ENCODE measurements at regions of chr17 and their contacts with region 1.

Region 1: GRCh38 chr17:41530062-41531051 is 2.2 kb upstream of the KRT19 start:
- DNase-seq: no peak
- ATAC-seq: peak; percentile 75
- H3K4me3 ChIP-seq: peak overlapping the region; percentile 0 to 3; a peak in 3 of 4 replicates
- H3K27ac ChIP-seq: peak overlapping the region; percentile 96
- H3K4me1 ChIP-seq: peaks cover 48% of the 10 kb centered on the region
- H3K27me3 ChIP-seq: no peaks in the 10 kb centered on the region
- CTCF ChIP-seq: no peak

Region 2: DNA sequence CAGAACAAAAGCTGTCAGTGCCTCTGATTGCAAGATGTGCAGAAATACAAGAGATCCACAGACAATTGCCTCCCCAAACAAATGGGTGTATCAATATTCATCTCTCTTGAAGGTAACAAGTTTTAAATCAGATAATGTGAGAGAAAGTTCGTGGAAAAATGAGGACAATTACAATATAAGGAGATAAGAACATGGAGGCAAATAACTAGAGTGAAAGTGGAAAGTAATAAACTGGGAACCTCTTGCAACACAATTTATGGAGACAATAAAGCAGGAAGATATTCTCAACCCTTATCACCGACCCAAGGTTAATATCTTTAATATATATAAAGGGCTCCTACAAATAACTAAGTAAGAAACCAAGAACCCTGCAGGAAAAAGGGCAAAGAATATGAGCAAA is 12.0 kb after region 1 on chr17:
- CTCF ChIA-PET with region 1: interaction called, 6 read pairs
- POLR2A ChIA-PET with region 1: interaction called, 12 read pairs
- in situ Hi-C with region 1: no loop called
- intact Hi-C with region 1: no loop called
- DNase-seq: no peak
- ATAC-seq: no peak
- H3K4me3 ChIP-seq: no peak overlapping the region
- H3K27ac ChIP-seq: peak overlapping the region; percentile 77; the same call in 1 of the 2 replicates
- H3K4me1 ChIP-seq: peaks cover 51% of the 10 kb centered on the region
- H3K27me3 ChIP-seq: no peaks in the 10 kb centered on the region
- CTCF ChIP-seq: no peak

Region 3: DNA sequence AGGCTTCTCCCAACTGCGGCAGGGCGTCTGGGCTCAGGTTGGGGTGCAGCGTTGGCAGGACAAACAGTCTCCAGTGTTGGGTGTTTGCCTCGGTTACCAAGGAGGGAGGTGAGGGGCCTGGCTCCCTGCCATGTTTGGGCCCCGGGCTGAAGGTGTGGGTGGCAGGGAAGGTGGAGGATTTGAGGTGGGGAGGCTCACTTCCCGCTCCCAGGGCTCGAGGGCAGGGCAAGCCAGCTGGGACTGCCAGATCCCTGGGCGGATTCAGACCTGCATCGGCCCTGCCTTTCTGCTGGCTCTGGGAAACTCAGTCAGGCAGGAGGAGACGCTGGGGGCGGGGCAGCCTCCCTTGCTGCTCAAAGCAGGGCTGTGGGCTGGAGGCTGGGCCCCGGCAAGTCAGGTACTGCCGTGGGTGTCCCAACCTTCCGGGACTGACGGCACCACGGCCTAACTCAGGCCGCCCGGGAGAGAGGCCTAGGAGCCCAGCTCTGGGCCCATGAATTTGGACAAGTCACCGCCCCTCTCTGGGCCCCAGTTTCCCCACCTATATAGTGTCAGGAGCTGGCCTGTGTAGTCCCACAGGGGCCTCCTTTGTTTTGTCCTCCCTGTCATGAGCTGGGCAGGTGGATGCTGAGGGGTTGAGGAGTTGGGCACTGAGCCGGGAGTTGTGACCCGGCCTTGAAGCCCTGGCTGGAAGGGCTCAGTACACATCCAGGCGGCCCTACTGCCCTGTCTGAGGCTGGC is 125.4 kb after region 1 on chr17:
- CTCF ChIA-PET with region 1: no interaction called
- POLR2A ChIA-PET with region 1: no interaction called
- in situ Hi-C with region 1: no loop called
- intact Hi-C with region 1: no loop called
- DNase-seq: no peak
- ATAC-seq: peak; percentile 33; the same call in 1 of the 2 replicates
- H3K4me3 ChIP-seq: no peak overlapping the region
- H3K27ac ChIP-seq: no peak overlapping the region
- H3K4me1 ChIP-seq: peaks cover 13% of the 10 kb centered on the region; the same call in 1 of the 2 replicates
- H3K27me3 ChIP-seq: no peaks in the 10 kb centered on the region
- CTCF ChIP-seq: no peak

Measured in Panc1 (cell line).